Left colon (tissue), 2 donors: ENCODE measurements at regions of chr1 and their contacts with region 1.

Region 1: GRCh38 chr1:28736450-28737306 is at the start of gene YTHDF2:
- DNase-seq: peak; percentile 97 to 98
- ATAC-seq: peak; percentile 91
- total RNA-seq, gene YTHDF2: 59.4 to 64.9 TPM

Region 2: DNA sequence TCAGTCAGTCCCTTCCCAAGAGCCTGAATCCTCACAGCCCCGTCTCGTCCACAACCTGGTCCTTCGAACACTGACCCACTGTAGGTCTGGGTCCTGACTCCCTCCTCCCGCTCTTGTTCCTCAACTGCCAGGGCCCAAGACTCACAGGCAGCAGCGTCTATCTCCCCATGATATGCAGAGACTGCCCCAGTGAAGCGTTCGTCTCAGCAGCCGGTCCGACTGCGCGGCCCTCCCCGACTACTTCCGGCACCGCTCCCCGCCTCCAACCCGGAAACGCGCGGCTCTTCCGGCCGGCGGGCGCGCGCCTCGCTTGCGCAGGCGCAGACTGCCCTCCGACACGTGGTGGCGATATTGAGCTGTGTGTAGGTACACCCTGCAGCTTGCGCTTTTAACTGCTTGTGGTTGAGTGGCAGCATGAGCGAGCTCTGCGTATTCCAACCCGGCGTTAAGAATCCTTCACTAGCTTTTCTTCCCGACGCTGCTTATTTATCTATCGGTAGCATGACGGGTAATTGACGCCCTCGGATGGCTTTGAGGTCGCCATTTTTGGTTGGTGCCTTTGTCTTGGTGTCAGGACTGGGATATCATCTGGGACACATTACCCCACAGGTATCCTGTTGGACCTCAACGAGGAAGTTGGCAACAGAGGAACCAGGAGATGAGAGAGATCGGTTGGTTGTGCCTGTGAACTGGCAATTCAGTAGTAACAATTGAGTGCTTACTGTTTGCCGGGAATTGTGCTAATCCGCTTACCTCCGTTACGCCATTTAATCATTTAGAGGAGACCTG is 93.6 kb before region 1 on chr1 and contains the start of gene TAF12:
- intact Hi-C with region 1: loop called in 1 of 2 experiments (anchors 5 kb)
- DNase-seq: peak; percentile 92 to 93
- ATAC-seq: peak; percentile 84
- total RNA-seq, gene TAF12: 14.7 to 15.2 TPM